ENCODE measurements at regions of chr11 and their contacts with region 1.

Region 1: GRCh38 chr11:83836883-83837654 is 550.9 kb upstream of the CCDC90B start:
- DNase-seq: peak; percentile 53
- H3K4me3 Mint-ChIP-seq: no peak overlapping the region
- H3K27ac Mint-ChIP-seq: no peak overlapping the region
- H3K4me1 Mint-ChIP-seq: no peaks in the 10 kb centered on the region
- H3K27me3 Mint-ChIP-seq: peaks cover 63% of the 10 kb centered on the region
- CTCF ChIP-seq: peak; percentile 58

Region 2: DNA sequence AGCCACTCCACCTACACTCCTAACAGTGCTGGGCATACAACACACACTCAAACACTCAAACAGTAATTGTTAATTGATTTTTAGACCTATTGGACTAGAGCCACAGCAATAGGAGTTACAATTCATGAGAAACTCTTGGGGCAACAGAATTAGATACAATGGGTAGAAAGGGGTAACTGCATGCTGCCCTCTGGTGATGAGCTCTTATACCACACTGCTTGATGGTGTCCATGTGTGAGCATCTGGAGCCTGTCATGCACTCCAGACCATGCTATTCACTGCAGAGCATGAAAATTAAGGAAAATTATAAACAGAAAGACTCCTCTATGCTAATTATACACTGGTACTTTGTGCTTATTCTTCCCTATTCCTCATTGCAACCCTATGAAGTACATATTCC is 424.6 kb after region 1 on chr11:
- CTCF ChIA-PET with region 1: no interaction called
- POLR2A ChIA-PET with region 1: no interaction called
- intact Hi-C with region 1: loop called (anchors 10 kb)
- DNase-seq: no peak
- H3K4me3 Mint-ChIP-seq: no peak overlapping the region
- H3K27ac Mint-ChIP-seq: no peak overlapping the region
- H3K4me1 Mint-ChIP-seq: no peaks in the 10 kb centered on the region
- H3K27me3 Mint-ChIP-seq: peaks cover 8% of the 10 kb centered on the region
- CTCF ChIP-seq: no peak

Region 3: DNA sequence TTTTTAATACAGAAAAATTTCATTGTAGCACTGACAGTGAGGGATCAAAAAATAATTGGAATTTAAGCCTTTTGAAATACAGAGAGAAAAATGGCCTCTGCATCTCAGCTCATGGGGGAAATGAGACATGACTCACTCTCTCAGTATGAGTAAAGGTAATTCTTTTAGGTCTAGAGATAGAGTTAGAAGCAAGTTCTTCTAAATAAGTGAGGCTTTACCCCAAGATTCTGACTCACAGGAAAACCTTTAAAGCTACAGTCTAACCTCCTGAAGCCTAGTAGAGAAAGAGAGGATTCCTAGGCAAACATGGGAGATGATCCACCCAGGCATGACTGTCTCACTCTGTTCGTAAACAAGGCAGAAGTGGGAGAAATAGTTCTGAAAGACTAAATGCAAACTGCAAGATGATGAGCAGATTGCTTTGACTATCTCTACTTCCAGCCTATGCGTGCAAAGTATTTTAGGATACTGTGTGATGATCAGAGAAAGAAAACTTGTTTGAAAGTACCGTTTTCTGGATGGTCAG is 452.4 kb after region 1 on chr11:
- CTCF ChIA-PET with region 1: no interaction called
- POLR2A ChIA-PET with region 1: no interaction called
- intact Hi-C with region 1: no loop called
- DNase-seq: no peak
- H3K4me3 Mint-ChIP-seq: no peak overlapping the region
- H3K27ac Mint-ChIP-seq: no peak overlapping the region
- H3K4me1 Mint-ChIP-seq: no peaks in the 10 kb centered on the region
- H3K27me3 Mint-ChIP-seq: no peaks in the 10 kb centered on the region
- CTCF ChIP-seq: no peak

Region 4: DNA sequence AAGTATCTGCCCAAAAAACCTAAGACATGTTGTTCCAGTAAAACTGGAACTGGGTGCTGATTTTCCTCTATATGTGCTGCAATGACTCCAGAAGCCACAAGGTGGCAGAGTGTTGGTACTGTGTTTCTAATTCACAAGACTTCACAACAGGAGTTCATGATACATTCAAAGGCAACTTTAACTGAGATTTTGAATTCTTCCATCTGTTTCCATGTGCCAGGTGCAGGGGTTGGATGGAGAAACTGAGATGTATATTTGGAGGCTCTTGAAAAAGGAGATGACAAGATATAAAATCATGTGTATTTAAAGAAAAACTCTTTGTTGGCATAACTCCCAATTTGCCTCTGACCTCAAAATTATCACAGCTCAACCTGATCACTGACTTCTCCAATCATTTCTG is 547.7 kb after region 1 on chr11:
- CTCF ChIA-PET with region 1: interaction called, 11 read pairs
- POLR2A ChIA-PET with region 1: no interaction called
- intact Hi-C with region 1: loop called (anchors 5 kb)
- DNase-seq: peak; percentile 50
- H3K4me3 Mint-ChIP-seq: no peak overlapping the region
- H3K27ac Mint-ChIP-seq: no peak overlapping the region
- H3K4me1 Mint-ChIP-seq: no peaks in the 10 kb centered on the region
- H3K27me3 Mint-ChIP-seq: peaks cover 14% of the 10 kb centered on the region
- CTCF ChIP-seq: peak; percentile 59

Region 5: GRCh38 chr11:84524422-84525051 is 687.5 kb after region 1 on chr11:
- CTCF ChIA-PET with region 1: interaction called, 40 read pairs
- POLR2A ChIA-PET with region 1: no interaction called
- intact Hi-C with region 1: loop called (anchors 1 kb)
- DNase-seq: peak; percentile 6
- H3K4me3 Mint-ChIP-seq: no peak overlapping the region
- H3K27ac Mint-ChIP-seq: no peak overlapping the region
- H3K4me1 Mint-ChIP-seq: no peaks in the 10 kb centered on the region
- H3K27me3 Mint-ChIP-seq: peaks cover 40% of the 10 kb centered on the region
- CTCF ChIP-seq: peak; percentile 53

Region 6: GRCh38 chr11:84564180-84564866 is 727.3 kb after region 1 on chr11:
- CTCF ChIA-PET with region 1: interaction called, 31 read pairs
- POLR2A ChIA-PET with region 1: no interaction called
- intact Hi-C with region 1: loop called (anchors 1 kb)
- DNase-seq: peak; percentile 48
- H3K4me3 Mint-ChIP-seq: no peak overlapping the region
- H3K27ac Mint-ChIP-seq: no peak overlapping the region
- H3K4me1 Mint-ChIP-seq: no peaks in the 10 kb centered on the region
- H3K27me3 Mint-ChIP-seq: peaks cover 67% of the 10 kb centered on the region
- CTCF ChIP-seq: peak; percentile 62

Measured in MCF 10A (cell line).